ENCODE measurements at regions of chr4 and their contacts with region 1.

Region 1: GRCh38 chr4:27068151-27068867 is 207.7 kb downstream of the STIM2 start:
- H3K4me3 Mint-ChIP-seq: peak overlapping the region; percentile 17
- H3K27ac Mint-ChIP-seq: peak overlapping the region; percentile 91
- H3K4me1 Mint-ChIP-seq: peaks cover 46% of the 10 kb centered on the region
- H3K27me3 Mint-ChIP-seq: peaks cover 2% of the 10 kb centered on the region

Region 2: DNA sequence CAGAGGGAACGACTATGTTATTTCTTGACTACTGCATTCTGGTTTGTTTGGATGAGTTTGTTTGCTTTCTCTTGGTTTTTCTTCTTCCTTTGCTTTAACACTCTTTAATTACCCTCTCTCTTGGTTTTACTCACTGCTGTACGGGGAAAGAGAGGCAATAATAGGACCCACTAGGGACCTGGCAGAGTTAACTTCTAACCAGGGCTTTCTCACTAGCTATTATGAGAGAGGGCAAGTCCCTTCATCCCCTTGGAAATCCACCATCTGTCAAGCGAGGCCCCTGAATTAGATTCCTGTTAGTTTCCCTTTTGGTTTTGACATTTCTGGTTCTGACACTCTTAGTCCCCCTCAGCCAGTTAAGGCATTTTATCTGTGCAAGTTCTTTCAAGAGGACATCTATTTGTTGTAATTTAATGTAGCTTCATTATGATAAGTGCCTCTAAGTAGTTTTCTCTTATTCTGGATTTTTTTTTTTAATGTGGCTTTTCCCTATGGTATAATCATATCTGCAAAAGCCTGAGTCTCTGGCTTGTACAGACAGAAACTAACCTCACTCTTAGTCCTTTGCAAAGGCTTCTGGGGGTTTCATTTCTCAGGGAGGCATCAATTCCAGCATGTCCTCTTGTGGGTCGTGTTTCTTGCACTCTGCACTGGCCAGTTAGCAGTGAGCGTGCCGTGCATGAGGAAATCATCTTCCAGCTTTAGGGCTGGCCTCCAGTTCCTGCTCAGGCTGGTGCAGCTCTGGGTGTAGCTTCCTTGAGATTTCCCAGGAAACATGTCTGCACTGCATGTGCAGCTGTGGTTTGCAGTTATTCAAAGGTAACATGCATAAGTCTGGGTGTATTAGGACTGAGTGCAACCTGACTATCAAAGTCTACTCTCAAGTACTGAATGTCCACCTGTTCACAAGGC is 13.6 kb after region 1 on chr4:
- intact Hi-C with region 1: loop called (anchors 2 kb)
- H3K4me3 Mint-ChIP-seq: no peak overlapping the region
- H3K27ac Mint-ChIP-seq: peak overlapping the region; percentile 83
- H3K4me1 Mint-ChIP-seq: peaks cover 73% of the 10 kb centered on the region
- H3K27me3 Mint-ChIP-seq: peaks cover 38% of the 10 kb centered on the region

Measured in dendritic cell treated with granulocyte-macrophage colony-stimulating factor and Interleukin-4, amounts not matched to agents 40 ng/mL and 50 ng/mL, for 4 days (primary cell).